WTC11 (cell line): ENCODE measurements at regions of chr22 and their contacts with region 1.

Region 1: DNA sequence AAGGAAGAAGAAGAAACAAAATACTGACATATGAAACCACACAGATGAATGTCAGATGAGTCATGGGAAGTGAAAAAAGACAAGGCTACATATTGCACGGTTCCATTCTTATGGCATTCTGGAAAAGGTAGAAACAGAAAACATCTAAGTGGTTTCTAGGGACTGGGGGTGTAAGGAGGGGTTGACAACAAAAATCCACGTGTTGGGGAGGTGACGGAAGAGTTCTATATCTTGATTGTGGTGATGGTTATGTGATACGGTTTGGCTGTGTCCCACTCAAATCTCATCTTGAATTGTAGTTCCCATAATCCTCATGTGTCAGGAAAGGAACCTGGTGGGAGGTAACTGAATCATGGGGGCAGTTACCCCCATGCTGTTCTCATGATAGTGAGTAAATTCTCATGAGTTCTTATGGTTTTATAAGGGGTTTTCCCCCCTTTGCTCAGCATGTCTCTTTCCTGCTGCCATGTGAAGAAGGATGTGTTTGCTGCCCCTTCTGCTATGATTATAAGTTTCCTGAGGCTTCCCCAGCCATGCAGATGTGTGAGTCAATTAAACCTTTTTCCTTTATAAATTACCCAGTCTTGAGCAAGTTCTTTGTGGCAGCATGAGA is 6.4 kb upstream of the ARFGAP3 start:
- DNase-seq: no peak
- ATAC-seq: no peak
- H3K4me3 Mint-ChIP-seq: no peak overlapping the region
- H3K27ac Mint-ChIP-seq: no peak overlapping the region
- H3K4me1 Mint-ChIP-seq: peaks cover 4% of the 10 kb centered on the region; the same call in 1 of the 2 replicates
- H3K27me3 Mint-ChIP-seq: peaks cover 9% of the 10 kb centered on the region
- CTCF ChIP-seq: no peak

Region 2: GRCh38 chr22:42799461-42800405 is 63.7 kb before region 1 on chr22:
- CTCF ChIA-PET with region 1: interaction called, 11 read pairs
- POLR2A ChIA-PET with region 1: no interaction called
- DNase-seq: no peak
- ATAC-seq: peak; percentile 82
- H3K4me3 Mint-ChIP-seq: no peak overlapping the region
- H3K27ac Mint-ChIP-seq: no peak overlapping the region
- H3K4me1 Mint-ChIP-seq: peaks cover 19% of the 10 kb centered on the region
- H3K27me3 Mint-ChIP-seq: no peaks in the 10 kb centered on the region
- CTCF ChIP-seq: no peak

Region 3: GRCh38 chr22:42881982-42882656 is 18.7 kb after region 1 on chr22:
- CTCF ChIA-PET with region 1: interaction called, 15 read pairs
- POLR2A ChIA-PET with region 1: interaction called, 6 read pairs
- DNase-seq: no peak
- ATAC-seq: no peak
- H3K4me3 Mint-ChIP-seq: no peak overlapping the region
- H3K27ac Mint-ChIP-seq: peak overlapping the region; percentile 54; the same call in 1 of the 2 replicates
- H3K4me1 Mint-ChIP-seq: peaks cover 10% of the 10 kb centered on the region
- H3K27me3 Mint-ChIP-seq: no peaks in the 10 kb centered on the region
- CTCF ChIP-seq: no peak

Region 4: DNA sequence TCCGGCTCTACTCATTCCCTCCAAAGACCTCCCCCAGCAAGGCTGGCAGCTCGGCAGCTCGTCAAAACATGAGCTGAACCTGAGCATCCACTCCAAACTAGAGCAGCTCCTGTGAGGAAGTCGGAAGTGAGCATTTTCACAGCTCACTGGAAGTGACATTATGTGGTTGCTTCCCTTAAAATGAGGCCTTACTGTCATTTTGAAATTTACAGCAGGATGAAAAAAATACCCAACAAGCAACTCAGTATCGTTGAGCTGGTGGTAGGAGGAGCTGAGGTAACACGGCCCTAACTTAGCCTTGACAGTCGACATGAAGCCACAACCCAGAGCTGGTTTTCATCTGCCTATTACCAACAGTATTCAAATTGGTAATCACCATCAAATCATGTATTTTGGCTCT is 31.6 kb after region 1 on chr22:
- CTCF ChIA-PET with region 1: interaction called, 23 read pairs
- POLR2A ChIA-PET with region 1: no interaction called
- DNase-seq: no peak
- ATAC-seq: no peak
- H3K4me3 Mint-ChIP-seq: no peak overlapping the region
- H3K27ac Mint-ChIP-seq: peak overlapping the region; percentile 58
- H3K4me1 Mint-ChIP-seq: peaks cover 27% of the 10 kb centered on the region
- H3K27me3 Mint-ChIP-seq: no peaks in the 10 kb centered on the region
- CTCF ChIP-seq: no peak

Region 5: GRCh38 chr22:43014869-43015676 is 151.6 kb after region 1 on chr22 and contains the start of gene PACSIN2:
- CTCF ChIA-PET with region 1: interaction called, 16 read pairs
- POLR2A ChIA-PET with region 1: interaction called, 3 read pairs
- DNase-seq: peak; percentile 100
- ATAC-seq: peak; percentile 95
- H3K4me3 Mint-ChIP-seq: peak within 1 kb of the TSS; percentile 95
- H3K27ac Mint-ChIP-seq: peak within 1 kb of the TSS; percentile 91
- H3K4me1 Mint-ChIP-seq: peaks cover 30% of the 10 kb centered on the region
- H3K27me3 Mint-ChIP-seq: peaks cover 14% of the 10 kb centered on the region
- CTCF ChIP-seq: no peak
- total RNA-seq, gene PACSIN2: 64.1 to 70.5 TPM (median 69.0 TPM) in 3 replicates

Region 6: GRCh38 chr22:43031617-43032016 is 168.2 kb after region 1 on chr22:
- CTCF ChIA-PET with region 1: interaction called, 20 read pairs
- POLR2A ChIA-PET with region 1: no interaction called
- DNase-seq: no peak
- ATAC-seq: no peak
- H3K4me3 Mint-ChIP-seq: no peak overlapping the region
- H3K27ac Mint-ChIP-seq: no peak overlapping the region
- H3K4me1 Mint-ChIP-seq: no peaks in the 10 kb centered on the region
- H3K27me3 Mint-ChIP-seq: no peaks in the 10 kb centered on the region
- CTCF ChIP-seq: no peak

Region 7: GRCh38 chr22:43060183-43060582 is 196.7 kb after region 1 on chr22:
- CTCF ChIA-PET with region 1: interaction called, 36 read pairs
- POLR2A ChIA-PET with region 1: no interaction called
- DNase-seq: peak; percentile 91
- ATAC-seq: peak; percentile 98
- H3K4me3 Mint-ChIP-seq: no peak overlapping the region
- H3K27ac Mint-ChIP-seq: peak overlapping the region; percentile 69; the same call in 1 of the 2 replicates
- H3K4me1 Mint-ChIP-seq: no peaks in the 10 kb centered on the region
- H3K27me3 Mint-ChIP-seq: no peaks in the 10 kb centered on the region
- CTCF ChIP-seq: peak; percentile 98